ENCODE measurements at regions of chr18 and their contacts with region 1.

Region 1: GRCh38 chr18:26548429-26549262 is at the start of gene KCTD1:
- DNase-seq: no peak
- H3K4me3 ChIP-seq: peak within 1 kb of the TSS; percentile 78
- H3K27me3 ChIP-seq: peaks cover 6% of the 10 kb centered on the region
- CTCF ChIP-seq: no peak
- polyA plus RNA-seq, gene KCTD1: 6.3 and 9.6 TPM in 2 replicates

Region 2: GRCh38 chr18:26046419-26047077 is 502.1 kb before region 1 on chr18:
- CTCF ChIA-PET with region 1: no interaction called
- POLR2A ChIA-PET with region 1: interaction called, 11 read pairs
- DNase-seq: no peak
- H3K4me3 ChIP-seq: no peak overlapping the region
- H3K27me3 ChIP-seq: no peaks in the 10 kb centered on the region
- CTCF ChIP-seq: no peak

Region 3: GRCh38 chr18:26233225-26233624 is 315.4 kb before region 1 on chr18:
- CTCF ChIA-PET with region 1: no interaction called
- POLR2A ChIA-PET with region 1: no interaction called
- DNase-seq: no peak
- H3K4me3 ChIP-seq: no peak overlapping the region
- H3K27me3 ChIP-seq: no peaks in the 10 kb centered on the region
- CTCF ChIP-seq: no peak

Region 4: DNA sequence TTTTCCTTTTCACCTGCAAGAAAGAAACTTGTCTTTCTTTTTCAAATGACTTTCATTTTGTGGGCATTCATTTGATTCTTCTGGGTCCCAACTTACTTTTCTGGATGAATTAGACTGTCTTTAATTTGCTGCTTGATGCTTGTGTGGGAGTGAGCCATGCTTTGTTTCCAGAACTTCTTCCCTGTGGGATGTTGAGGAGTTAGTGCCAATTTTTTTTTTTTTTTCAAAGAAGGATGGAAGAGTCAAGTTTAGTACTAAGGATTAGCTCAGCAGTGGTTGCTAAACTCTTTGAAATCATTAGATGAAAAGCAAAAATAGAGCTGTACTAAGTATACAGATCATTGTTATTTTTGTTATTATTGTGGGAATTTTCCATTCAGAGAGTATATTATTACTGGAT is 16.9 kb after region 1 on chr18:
- CTCF ChIA-PET with region 1: no interaction called
- POLR2A ChIA-PET with region 1: no interaction called
- DNase-seq: no peak
- H3K4me3 ChIP-seq: no peak overlapping the region
- H3K27me3 ChIP-seq: peaks cover 3% of the 10 kb centered on the region
- CTCF ChIP-seq: no peak

Region 5: GRCh38 chr18:26662996-26663395 is 114.3 kb after region 1 on chr18:
- CTCF ChIA-PET with region 1: no interaction called
- POLR2A ChIA-PET with region 1: no interaction called
- DNase-seq: no peak
- H3K4me3 ChIP-seq: no peak overlapping the region
- H3K27me3 ChIP-seq: peaks cover 10% of the 10 kb centered on the region
- CTCF ChIP-seq: no peak

Region 6: GRCh38 chr18:26723981-26724380 is 175.3 kb after region 1 on chr18:
- CTCF ChIA-PET with region 1: no interaction called
- POLR2A ChIA-PET with region 1: no interaction called
- DNase-seq: no peak
- H3K4me3 ChIP-seq: no peak overlapping the region
- H3K27me3 ChIP-seq: no peaks in the 10 kb centered on the region
- CTCF ChIP-seq: no peak